AG04449 (cell line): ENCODE measurements at regions of chr5 and their contacts with region 1.

Region 1: GRCh38 chr5:32790411-32790951 is 79.4 kb downstream of the NPR3 start:
- DNase-seq: peak; percentile 71
- H3K4me3 ChIP-seq: no peak overlapping the region
- CTCF ChIP-seq: no peak

Region 2: DNA sequence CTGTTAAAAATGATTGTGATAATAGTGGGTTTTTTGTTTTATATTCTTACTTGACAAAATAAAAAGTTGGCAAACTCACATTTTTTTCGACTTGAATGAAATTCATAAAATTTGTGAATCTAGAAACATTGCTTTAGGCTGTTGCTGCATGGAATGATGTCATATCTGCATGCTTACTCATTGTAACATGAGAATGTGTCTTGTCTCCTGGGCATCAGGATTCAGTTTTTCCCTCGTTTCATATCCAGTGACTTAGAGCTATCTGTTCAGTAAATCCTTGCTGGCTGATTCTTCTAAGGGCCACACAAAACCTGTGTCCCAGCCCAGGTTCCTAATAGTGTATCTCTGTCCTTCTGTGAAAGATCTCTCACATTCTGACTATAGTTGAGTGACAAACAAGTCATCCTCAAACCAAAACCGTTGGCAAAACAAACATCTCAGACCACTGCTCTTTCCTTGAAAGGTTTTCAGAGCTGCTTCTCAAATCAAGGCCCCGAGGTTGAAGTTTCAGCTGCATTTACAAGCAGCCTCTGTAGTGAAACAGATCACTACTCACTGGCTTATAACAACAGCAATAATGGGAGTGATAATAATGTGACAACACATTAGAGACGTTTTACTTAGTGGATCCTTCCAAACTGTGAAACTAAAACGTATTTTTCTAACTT is 15.6 kb after region 1 on chr5:
- CTCF ChIA-PET with region 1: interaction called, 11 read pairs
- POLR2A ChIA-PET with region 1: interaction called, 6 read pairs
- DNase-seq: peak; percentile 74
- H3K4me3 ChIP-seq: no peak overlapping the region
- CTCF ChIP-seq: no peak